Activated CD4-positive, alpha-beta memory T cell treated with anti-CD3 and anti-CD28 coated beads, Interleukin-2, amount 10 ng/mL, durations not matched to agents 7 days and 5 days (primary cell): ENCODE measurements at regions of chr3 and their contacts with region 1.

Region 1: DNA sequence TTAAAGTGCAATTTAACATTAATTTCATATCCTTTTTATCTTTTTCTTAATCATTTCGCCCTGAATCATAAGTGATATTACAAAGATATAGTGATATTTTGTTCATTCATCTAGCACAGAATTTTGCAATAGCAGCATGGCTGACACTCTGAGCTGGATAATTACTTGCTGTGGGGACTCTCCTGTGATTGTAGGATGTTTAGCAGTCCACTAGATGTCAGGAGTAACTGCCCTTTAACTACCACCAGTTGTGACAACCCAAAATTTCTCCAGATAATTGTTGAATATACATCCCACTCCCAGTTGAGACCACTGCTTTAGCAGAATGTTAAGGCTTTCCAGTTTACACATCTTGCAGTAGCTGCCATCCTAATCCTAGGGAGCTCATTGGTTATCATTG is 196.8 kb upstream of the MBNL1 start:
- DNase-seq: no peak
- H3K4me3 Mint-ChIP-seq: no peak overlapping the region
- H3K27ac Mint-ChIP-seq: no peak overlapping the region
- H3K4me1 Mint-ChIP-seq: peaks cover 11% of the 10 kb centered on the region
- H3K27me3 Mint-ChIP-seq: no peaks in the 10 kb centered on the region

Region 2: DNA sequence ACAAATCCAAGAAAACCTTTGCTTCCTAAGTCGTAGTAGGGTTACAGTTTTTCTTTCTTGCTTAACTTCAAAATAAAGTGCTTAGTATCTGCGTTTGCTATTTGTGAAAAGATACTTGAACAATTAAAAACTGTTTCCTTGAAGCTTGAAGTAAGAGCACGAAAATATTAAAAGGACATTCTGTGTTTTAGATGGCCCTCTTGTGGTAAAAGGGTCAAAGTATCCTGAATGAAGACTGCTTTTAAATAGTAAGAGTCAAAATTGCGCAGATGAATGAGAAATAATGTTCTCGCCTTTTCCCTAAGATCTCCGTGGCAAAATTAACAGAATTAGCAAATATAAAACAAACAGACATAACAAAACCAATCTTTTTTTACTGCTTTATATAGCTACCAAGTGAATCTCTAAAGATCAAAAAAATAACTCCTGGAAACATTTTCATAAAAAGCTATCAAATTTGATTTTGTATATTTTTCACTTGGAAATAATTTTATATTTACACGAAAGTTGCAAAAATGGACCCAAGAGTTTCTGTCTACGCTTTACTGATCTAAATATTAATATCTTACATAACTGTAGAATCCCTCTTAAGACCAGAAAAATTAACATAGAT is 372.2 kb after region 1 on chr3:
- CTCF ChIA-PET with region 1: interaction called, 20 read pairs
- POLR2A ChIA-PET with region 1: no interaction called
- DNase-seq: no peak
- H3K4me3 Mint-ChIP-seq: no peak overlapping the region
- H3K27ac Mint-ChIP-seq: no peak overlapping the region
- H3K4me1 Mint-ChIP-seq: peaks cover 53% of the 10 kb centered on the region
- H3K27me3 Mint-ChIP-seq: no peaks in the 10 kb centered on the region

Region 3: GRCh38 chr3:152471814-152472671 is 400.1 kb after region 1 on chr3:
- CTCF ChIA-PET with region 1: interaction called, 17 read pairs
- POLR2A ChIA-PET with region 1: no interaction called
- DNase-seq: peak; percentile 73
- H3K4me3 Mint-ChIP-seq: peak overlapping the region; percentile 1
- H3K27ac Mint-ChIP-seq: no peak overlapping the region
- H3K4me1 Mint-ChIP-seq: peaks cover 10% of the 10 kb centered on the region
- H3K27me3 Mint-ChIP-seq: peaks cover 8% of the 10 kb centered on the region